HepG2 (cell line): ENCODE measurements at regions of chr13 and their contacts with region 1.

Region 1: GRCh38 chr13:64471916-64472315 is 2758.2 kb downstream of the PCDH9 start:
- DNase-seq: peak; percentile 15
- ATAC-seq: no peak
- H3K4me3 ChIP-seq: no peak overlapping the region
- H3K27ac ChIP-seq: no peak overlapping the region
- H3K4me1 ChIP-seq: no peaks in the 10 kb centered on the region
- H3K27me3 ChIP-seq: no peaks in the 10 kb centered on the region
- CTCF ChIP-seq: peak; percentile 31; the same call in 1 of the 2 replicates
- EP300 ChIP-seq: no peak
- POLR2A ChIP-seq: no peak
- RAD21 ChIP-seq: no peak

Region 2: GRCh38 chr13:65638572-65639168 is 1166.8 kb after region 1 on chr13:
- CTCF ChIA-PET with region 1: no interaction called
- POLR2A ChIA-PET with region 1: no interaction called
- in situ Hi-C with region 1: loop called (anchors 25 kb)
- intact Hi-C with region 1: loop called (anchors 5 kb)
- DNase-seq: peak; percentile 16
- ATAC-seq: peak; percentile 67
- H3K4me3 ChIP-seq: no peak overlapping the region
- H3K27ac ChIP-seq: no peak overlapping the region
- H3K4me1 ChIP-seq: no peaks in the 10 kb centered on the region
- H3K27me3 ChIP-seq: no peaks in the 10 kb centered on the region
- CTCF ChIP-seq: peak; percentile 66
- EP300 ChIP-seq: no peak
- POLR2A ChIP-seq: no peak
- RAD21 ChIP-seq: no peak